AG04450 (cell line): ENCODE measurements at regions of chr12 and their contacts with region 1.

Region 1: GRCh38 chr12:121334513-121335343 is 17.5 kb downstream of the ANAPC5 start:
- DNase-seq: peak; percentile 36
- H3K4me3 ChIP-seq: no peak overlapping the region
- H3K27ac ChIP-seq: no peak overlapping the region
- H3K27me3 ChIP-seq: no peaks in the 10 kb centered on the region
- CTCF ChIP-seq: peak; percentile 86

Region 2: DNA sequence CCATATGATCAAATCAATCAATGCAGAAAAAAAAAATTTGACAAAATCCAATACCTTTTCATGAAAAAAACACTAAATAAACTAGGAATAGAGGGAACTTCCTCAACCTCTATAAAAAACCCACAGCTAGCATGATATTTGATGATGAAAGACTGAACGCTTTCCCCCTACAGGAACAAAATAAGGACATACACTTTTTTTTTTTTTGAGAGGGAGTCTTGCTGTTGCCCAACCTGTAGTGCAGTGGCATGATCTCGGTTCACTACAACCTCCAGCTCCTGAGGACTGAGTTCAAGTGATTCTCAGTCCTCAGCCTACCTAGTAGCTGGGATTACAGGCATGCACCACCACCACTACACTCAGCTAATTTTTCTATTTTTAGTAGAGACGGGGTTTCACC is 20.3 kb before region 1 on chr12:
- CTCF ChIA-PET with region 1: interaction called, 13 read pairs
- POLR2A ChIA-PET with region 1: no interaction called
- DNase-seq: no peak
- H3K4me3 ChIP-seq: no peak overlapping the region
- H3K27ac ChIP-seq: no peak overlapping the region
- H3K27me3 ChIP-seq: no peaks in the 10 kb centered on the region
- CTCF ChIP-seq: no peak

Region 3: GRCh38 chr12:121351820-121352681 is 17.3 kb after region 1 on chr12 and contains the start of gene ANAPC5:
- CTCF ChIA-PET with region 1: interaction called, 53 read pairs
- POLR2A ChIA-PET with region 1: no interaction called
- DNase-seq: peak; percentile 95
- H3K4me3 ChIP-seq: peak within 1 kb of the TSS; percentile 95
- H3K27ac ChIP-seq: peak within 1 kb of the TSS; percentile 87
- H3K27me3 ChIP-seq: no peaks in the 10 kb centered on the region
- CTCF ChIP-seq: no peak
- polyA plus RNA-seq, gene ANAPC5: 145 and 146 TPM in 2 replicates

Region 4: DNA sequence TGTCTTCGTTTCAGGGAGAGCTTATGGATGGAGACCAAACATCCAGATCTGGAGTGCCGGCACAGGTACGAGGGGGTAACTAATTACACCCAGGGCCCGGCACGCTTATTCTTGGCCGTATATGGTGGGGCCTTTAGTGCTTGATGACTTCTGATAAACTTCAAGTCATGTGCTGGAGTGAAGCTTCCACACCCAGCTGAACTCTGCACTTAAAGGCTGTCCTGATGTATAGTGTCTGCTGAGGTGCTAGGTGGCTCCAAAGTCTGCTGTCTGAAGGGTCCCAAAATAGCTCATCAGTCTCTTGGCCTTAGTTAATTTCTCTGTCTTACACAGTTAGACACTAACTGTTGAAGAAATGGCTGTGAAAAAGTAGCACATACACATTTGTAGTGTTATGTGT is 83.1 kb after region 1 on chr12:
- CTCF ChIA-PET with region 1: interaction called, 13 read pairs
- POLR2A ChIA-PET with region 1: no interaction called
- DNase-seq: no peak
- H3K4me3 ChIP-seq: no peak overlapping the region
- H3K27ac ChIP-seq: no peak overlapping the region
- H3K27me3 ChIP-seq: no peaks in the 10 kb centered on the region
- CTCF ChIP-seq: no peak

Region 5: DNA sequence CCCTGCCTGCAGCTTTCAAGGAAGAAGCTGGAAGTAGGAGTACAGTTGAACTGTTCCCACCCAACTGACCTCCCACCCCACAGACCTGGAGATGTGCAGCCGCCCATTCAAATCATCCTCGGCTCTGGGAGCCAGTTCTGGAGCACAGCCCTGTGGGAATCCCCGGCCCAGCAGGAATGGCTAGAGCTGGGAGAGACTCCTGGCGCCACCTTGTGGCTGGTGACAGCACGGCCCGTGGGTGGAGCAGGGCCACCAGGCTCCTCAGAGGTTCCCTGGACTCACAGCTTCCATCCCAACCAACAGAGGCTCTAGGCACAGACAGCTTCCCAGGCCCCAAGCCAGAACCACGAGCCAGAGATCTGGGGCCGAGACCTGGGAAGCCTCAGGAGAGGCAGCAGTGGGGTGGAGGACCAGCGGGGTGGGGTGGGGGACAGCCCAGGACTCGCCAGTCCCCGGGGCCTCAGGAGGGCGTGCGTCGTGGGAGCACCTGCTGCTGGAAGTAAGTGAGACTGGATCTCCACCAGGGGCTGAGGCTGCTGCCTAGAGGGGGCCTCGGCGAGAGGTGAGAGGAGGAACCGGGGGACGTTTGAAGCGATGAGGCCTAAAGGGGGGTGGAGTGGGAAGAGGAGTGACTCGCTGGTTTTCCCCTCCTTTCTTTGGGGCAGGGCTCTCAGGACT is 108.6 kb after region 1 on chr12:
- CTCF ChIA-PET with region 1: interaction called, 135 read pairs
- POLR2A ChIA-PET with region 1: no interaction called
- DNase-seq: peak; percentile 13
- H3K4me3 ChIP-seq: no peak overlapping the region
- H3K27ac ChIP-seq: peak overlapping the region; percentile 11
- H3K27me3 ChIP-seq: no peaks in the 10 kb centered on the region
- CTCF ChIP-seq: peak; percentile 92